ENCODE measurements at regions of chr16 and their contacts with region 1.

Region 1: DNA sequence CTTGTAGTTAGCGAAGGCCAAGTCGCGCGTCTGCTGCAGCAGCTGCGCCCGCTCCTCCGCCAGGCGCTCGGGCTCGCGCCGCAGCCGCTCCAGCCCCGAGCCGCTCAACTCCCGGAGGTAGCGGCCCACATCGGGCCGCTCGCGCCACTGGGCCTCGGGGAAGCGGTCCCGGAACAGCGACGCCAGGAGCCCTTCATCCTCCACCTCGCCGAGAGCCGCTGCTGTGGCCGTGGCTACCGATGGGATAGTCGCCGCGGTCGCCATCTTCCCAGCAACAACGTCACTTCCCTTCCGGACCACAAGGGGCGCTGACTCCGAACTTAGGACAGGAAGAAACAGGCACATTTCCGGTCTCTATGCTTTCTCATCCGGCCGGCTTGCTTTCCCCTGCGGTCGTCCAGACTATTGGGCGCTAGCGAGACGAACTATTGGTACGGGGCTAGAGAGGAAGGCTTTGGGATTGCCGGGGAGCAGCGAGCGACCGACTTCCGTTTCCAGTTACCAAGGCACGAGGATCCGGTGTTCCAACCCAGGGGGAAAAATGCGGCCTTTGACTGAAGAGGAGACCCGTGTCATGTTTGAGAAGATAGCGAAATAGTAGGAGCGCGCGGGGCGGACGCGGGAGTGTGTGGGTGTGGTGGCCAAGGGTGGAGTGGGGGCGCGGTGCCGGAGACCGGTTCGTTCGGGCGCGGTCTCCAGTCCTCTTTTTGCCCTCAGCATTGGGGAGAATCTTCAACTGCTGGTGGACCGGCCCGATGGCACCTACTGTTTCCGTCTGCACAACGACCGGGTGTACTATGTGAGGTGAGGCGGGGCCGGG is at the starts of genes COG8 and NIP7:
- DNase-seq: peak; percentile 84 to 96 (median 89)
- ATAC-seq: peak; percentile 89
- H3K4me3 ChIP-seq: peak within 1 kb of the TSS; percentile 63
- H3K4me3 Mint-ChIP-seq: peak within 1 kb of the TSS; percentile 96
- H3K27ac ChIP-seq: peak within 1 kb of the TSS; percentile 79 to 80
- H3K27ac Mint-ChIP-seq: peak within 1 kb of the TSS; percentile 90
- H3K4me1 ChIP-seq: peaks cover 31% of the 10 kb centered on the region
- H3K4me1 Mint-ChIP-seq: peaks cover 61% of the 10 kb centered on the region
- H3K27me3 ChIP-seq: no peaks in the 10 kb centered on the region
- H3K27me3 Mint-ChIP-seq: no peaks in the 10 kb centered on the region
- CTCF ChIP-seq: peak; percentile 82
- total RNA-seq, gene COG8: 18.4 to 19.3 TPM
- total RNA-seq, gene NIP7: 36.7 to 38.2 TPM

Region 2: GRCh38 chr16:69132424-69133252 is 206.9 kb before region 1 on chr16 and contains the starts of genes CHTF8 and UTP4:
- CTCF ChIA-PET with region 1: no interaction called
- POLR2A ChIA-PET with region 1: interaction called, 4 read pairs
- intact Hi-C with region 1: loop called in 1 of 2 experiments (anchors 2 kb)
- DNase-seq: peak; percentile 72 to 94 (median 83)
- ATAC-seq: peak; percentile 87
- H3K4me3 ChIP-seq: peak within 1 kb of the TSS; percentile 96
- H3K4me3 Mint-ChIP-seq: peak within 1 kb of the TSS; percentile 96
- H3K27ac ChIP-seq: peak within 1 kb of the TSS; percentile 76 to 79
- H3K27ac Mint-ChIP-seq: peak within 1 kb of the TSS; percentile 95
- H3K4me1 ChIP-seq: peaks cover 22% of the 10 kb centered on the region
- H3K4me1 Mint-ChIP-seq: peaks cover 52% of the 10 kb centered on the region
- H3K27me3 ChIP-seq: no peaks in the 10 kb centered on the region
- H3K27me3 Mint-ChIP-seq: no peaks in the 10 kb centered on the region
- CTCF ChIP-seq: no peak
- total RNA-seq, gene CHTF8: 25.8 to 28.5 TPM
- total RNA-seq, gene UTP4: 40.1 to 40.3 TPM

Region 3: DNA sequence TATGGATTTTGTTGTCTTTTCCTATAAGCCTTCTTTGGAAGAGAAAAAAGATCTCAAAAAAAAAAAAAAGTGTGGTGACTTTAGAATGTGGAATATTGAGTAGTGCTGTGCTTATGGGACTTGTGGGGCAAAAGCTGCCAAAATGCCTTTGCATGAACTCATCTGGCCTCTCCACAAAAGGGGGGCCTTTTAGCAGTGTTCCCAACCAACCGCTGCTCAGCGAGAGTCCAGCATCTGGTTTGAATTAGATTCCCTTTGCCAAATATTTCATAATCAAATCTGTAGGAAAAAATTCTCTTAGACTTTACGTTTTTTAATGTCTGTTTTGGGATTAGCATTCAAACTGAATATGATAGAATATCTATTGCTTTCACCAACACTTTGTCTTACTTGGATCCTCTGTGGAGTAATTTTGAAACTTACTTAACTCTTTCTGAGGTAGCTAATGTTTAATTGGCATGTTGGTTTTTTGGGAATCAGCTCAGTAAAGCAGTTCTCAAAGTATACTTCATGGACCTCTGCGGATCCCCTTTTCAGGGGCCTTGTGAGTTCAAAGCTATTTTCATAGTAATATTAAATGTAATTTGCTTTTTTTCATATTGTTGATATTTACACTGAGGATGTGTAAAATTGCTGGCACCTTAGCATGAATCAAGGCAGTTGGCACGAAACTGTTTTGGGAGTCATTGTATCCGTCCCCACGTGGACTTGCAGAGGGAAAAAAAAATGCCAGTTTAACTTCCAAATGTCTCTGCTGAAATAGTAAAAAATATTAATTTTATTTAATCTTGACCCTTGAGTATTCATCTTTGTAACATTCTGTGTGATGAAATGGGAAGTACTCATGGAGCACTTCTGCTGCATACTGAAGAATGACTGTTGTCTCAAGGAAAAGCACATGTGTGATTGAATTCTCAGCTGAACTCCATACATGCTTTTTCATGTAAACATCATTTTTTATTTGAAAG is 63.1 kb before region 1 on chr16:
- CTCF ChIA-PET with region 1: no interaction called
- POLR2A ChIA-PET with region 1: no interaction called
- intact Hi-C with region 1: no loop called
- DNase-seq: no peak
- ATAC-seq: no peak
- H3K4me3 ChIP-seq: no peak overlapping the region
- H3K4me3 Mint-ChIP-seq: no peak overlapping the region
- H3K27ac ChIP-seq: no peak overlapping the region
- H3K27ac Mint-ChIP-seq: no peak overlapping the region
- H3K4me1 ChIP-seq: no peaks in the 10 kb centered on the region
- H3K4me1 Mint-ChIP-seq: no peaks in the 10 kb centered on the region
- H3K27me3 ChIP-seq: no peaks in the 10 kb centered on the region
- H3K27me3 Mint-ChIP-seq: no peaks in the 10 kb centered on the region
- CTCF ChIP-seq: no peak

Region 4: GRCh38 chr16:69302301-69302700 is 37.2 kb before region 1 on chr16:
- CTCF ChIA-PET with region 1: no interaction called
- POLR2A ChIA-PET with region 1: no interaction called
- intact Hi-C with region 1: no loop called
- DNase-seq: no peak
- ATAC-seq: no peak
- H3K4me3 ChIP-seq: no peak overlapping the region
- H3K4me3 Mint-ChIP-seq: no peak overlapping the region
- H3K27ac ChIP-seq: no peak overlapping the region
- H3K27ac Mint-ChIP-seq: no peak overlapping the region
- H3K4me1 ChIP-seq: no peaks in the 10 kb centered on the region
- H3K4me1 Mint-ChIP-seq: no peaks in the 10 kb centered on the region
- H3K27me3 ChIP-seq: no peaks in the 10 kb centered on the region
- H3K27me3 Mint-ChIP-seq: no peaks in the 10 kb centered on the region
- CTCF ChIP-seq: no peak

Region 5: DNA sequence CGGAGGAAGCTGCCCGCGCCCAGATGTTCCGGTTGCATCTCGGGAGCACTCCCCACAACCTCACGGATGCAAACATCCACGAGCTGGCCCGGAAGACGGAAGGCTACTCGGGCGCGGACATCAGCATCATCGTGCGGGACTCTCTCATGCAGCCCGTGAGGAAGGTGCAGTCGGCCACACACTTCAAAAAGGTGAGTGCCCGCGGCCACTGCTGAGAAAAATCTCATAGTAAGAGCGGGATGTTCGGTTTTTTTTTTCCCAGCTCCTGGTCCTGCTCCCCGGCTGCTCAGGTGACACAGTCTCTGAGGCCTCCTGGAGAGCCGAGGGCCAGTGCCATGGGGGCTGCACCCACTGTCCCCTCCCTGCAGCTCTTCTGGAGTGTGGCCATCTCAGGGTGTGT is 18.4 kb before region 1 on chr16:
- CTCF ChIA-PET with region 1: no interaction called
- POLR2A ChIA-PET with region 1: no interaction called
- intact Hi-C with region 1: no loop called
- DNase-seq: no peak
- ATAC-seq: no peak
- H3K4me3 ChIP-seq: no peak overlapping the region
- H3K4me3 Mint-ChIP-seq: no peak overlapping the region
- H3K27ac ChIP-seq: no peak overlapping the region
- H3K27ac Mint-ChIP-seq: no peak overlapping the region
- H3K4me1 ChIP-seq: peaks cover 5% of the 10 kb centered on the region
- H3K4me1 Mint-ChIP-seq: peaks cover 5% of the 10 kb centered on the region
- H3K27me3 ChIP-seq: no peaks in the 10 kb centered on the region
- H3K27me3 Mint-ChIP-seq: no peaks in the 10 kb centered on the region
- CTCF ChIP-seq: no peak

Region 6: DNA sequence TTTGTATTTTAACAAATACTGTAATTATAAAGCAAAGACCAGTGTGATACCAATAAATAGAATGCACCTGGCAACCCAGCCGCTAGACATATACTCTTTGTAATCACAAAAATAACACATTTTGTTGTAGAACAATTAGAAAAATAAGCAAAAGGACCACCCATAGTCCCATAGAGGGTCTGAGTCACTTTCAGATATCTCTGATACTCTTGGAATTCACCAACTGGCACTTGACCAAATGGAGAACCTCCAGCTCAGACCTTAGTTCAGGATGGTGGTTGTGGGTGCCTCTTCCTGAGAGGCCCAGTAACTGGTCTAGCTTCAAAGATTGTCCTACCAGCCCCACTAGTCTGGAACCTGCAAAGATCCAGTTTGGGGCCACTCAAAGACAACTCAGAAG is 47.1 kb after region 1 on chr16:
- CTCF ChIA-PET with region 1: interaction called, 4 read pairs
- POLR2A ChIA-PET with region 1: interaction called, 4 read pairs
- intact Hi-C with region 1: loop called (anchors 2 to 10 kb)
- DNase-seq: no peak
- ATAC-seq: no peak
- H3K4me3 ChIP-seq: no peak overlapping the region
- H3K4me3 Mint-ChIP-seq: peak overlapping the region; percentile 90
- H3K27ac ChIP-seq: no peak overlapping the region
- H3K27ac Mint-ChIP-seq: peak overlapping the region; percentile 95
- H3K4me1 ChIP-seq: peaks cover 20% of the 10 kb centered on the region
- H3K4me1 Mint-ChIP-seq: peaks cover 34% of the 10 kb centered on the region
- H3K27me3 ChIP-seq: no peaks in the 10 kb centered on the region
- H3K27me3 Mint-ChIP-seq: no peaks in the 10 kb centered on the region
- CTCF ChIP-seq: no peak